Calu3 (cell line): ENCODE measurements at regions of chr2 and their contacts with region 1.

Region 1: GRCh38 chr2:225122583-225123486 is 80.6 kb upstream of the DOCK10 start:
- DNase-seq: peak; percentile 38
- H3K4me3 Mint-ChIP-seq: no peak overlapping the region
- H3K27ac Mint-ChIP-seq: peak overlapping the region; percentile 3
- H3K4me1 Mint-ChIP-seq: no peaks in the 10 kb centered on the region
- H3K27me3 Mint-ChIP-seq: peaks cover 6% of the 10 kb centered on the region
- CTCF ChIP-seq: peak; percentile 39

Region 2: DNA sequence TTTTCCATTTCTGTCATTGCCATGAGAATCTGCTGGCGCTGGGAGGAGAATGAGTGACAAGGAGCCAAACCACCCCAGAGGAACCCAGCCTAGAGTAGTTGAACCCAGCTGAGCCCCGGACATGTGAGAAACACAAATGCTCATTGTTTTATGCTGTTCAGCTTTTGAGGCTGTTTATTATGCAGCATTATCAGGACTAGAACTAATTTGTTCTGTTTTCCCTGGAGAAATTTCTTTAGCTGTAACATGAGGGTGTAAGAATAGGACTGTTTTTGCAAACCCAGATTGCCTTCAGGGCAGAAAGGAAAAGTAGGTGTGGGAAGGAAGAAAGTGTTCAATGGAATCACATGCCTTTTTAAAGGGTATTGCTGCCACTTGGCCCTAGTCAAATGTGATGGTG is 52.0 kb before region 1 on chr2:
- CTCF ChIA-PET with region 1: no interaction called
- intact Hi-C with region 1: no loop called
- DNase-seq: no peak
- H3K4me3 Mint-ChIP-seq: no peak overlapping the region
- H3K27ac Mint-ChIP-seq: no peak overlapping the region
- H3K4me1 Mint-ChIP-seq: no peaks in the 10 kb centered on the region
- H3K27me3 Mint-ChIP-seq: peaks cover 24% of the 10 kb centered on the region
- CTCF ChIP-seq: no peak

Region 3: GRCh38 chr2:225083276-225083675 is 39.6 kb before region 1 on chr2:
- CTCF ChIA-PET with region 1: no interaction called
- intact Hi-C with region 1: no loop called
- DNase-seq: no peak
- H3K4me3 Mint-ChIP-seq: no peak overlapping the region
- H3K27ac Mint-ChIP-seq: no peak overlapping the region
- H3K4me1 Mint-ChIP-seq: peaks cover 9% of the 10 kb centered on the region
- H3K27me3 Mint-ChIP-seq: no peaks in the 10 kb centered on the region
- CTCF ChIP-seq: no peak

Region 4: GRCh38 chr2:225196579-225196978 is 73.7 kb after region 1 on chr2:
- CTCF ChIA-PET with region 1: no interaction called
- intact Hi-C with region 1: no loop called
- DNase-seq: no peak
- H3K4me3 Mint-ChIP-seq: no peak overlapping the region
- H3K27ac Mint-ChIP-seq: no peak overlapping the region
- H3K4me1 Mint-ChIP-seq: no peaks in the 10 kb centered on the region
- H3K27me3 Mint-ChIP-seq: no peaks in the 10 kb centered on the region
- CTCF ChIP-seq: no peak

Region 5: DNA sequence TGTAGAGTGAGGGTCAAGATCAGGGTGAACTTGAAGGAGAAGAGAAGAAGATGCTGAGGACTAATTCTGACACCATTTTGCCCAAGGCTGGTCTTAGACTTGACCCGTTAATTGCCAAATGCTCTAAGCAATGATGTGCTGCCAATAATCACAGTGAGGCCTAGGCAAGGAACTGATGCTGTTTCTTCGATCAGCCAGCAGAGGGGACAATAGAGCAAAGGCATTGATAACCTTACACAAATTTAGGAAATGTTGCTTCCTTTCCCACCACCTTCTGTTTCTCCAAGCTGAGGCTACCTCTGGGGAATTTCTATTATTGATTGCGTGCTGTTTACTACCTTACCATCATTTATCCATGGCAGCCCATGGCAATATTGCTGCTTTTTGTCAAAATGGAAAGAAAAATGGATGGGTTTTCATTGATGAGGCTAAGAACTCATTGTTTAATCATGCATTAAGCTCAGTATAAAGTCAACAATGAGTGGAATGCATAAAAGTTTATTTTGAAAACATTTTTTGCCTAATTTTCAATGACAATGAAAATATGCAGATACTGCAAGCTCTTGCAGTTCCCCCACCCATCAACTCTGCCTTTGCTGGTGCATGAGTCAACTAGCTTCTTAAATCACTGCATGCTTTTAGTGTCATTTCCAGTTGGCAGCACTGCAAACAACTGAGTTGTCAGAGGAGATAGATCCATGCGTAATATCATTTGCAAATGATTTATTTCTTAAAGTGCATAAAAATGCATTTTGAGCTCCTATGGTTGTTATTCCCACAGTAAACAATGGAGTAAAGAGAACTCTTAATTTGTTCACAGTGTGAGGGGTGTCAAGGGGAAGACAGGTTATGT is 160.2 kb after region 1 on chr2:
- CTCF ChIA-PET with region 1: no interaction called
- intact Hi-C with region 1: loop called (anchors 2 kb)
- DNase-seq: peak; percentile 34
- H3K4me3 Mint-ChIP-seq: no peak overlapping the region
- H3K27ac Mint-ChIP-seq: no peak overlapping the region
- H3K4me1 Mint-ChIP-seq: no peaks in the 10 kb centered on the region
- H3K27me3 Mint-ChIP-seq: peaks cover 23% of the 10 kb centered on the region
- CTCF ChIP-seq: peak; percentile 69

Region 6: GRCh38 chr2:225471482-225471881 is 348.6 kb after region 1 on chr2:
- CTCF ChIA-PET with region 1: no interaction called
- intact Hi-C with region 1: loop called (anchors 10 kb)
- DNase-seq: no peak
- H3K4me3 Mint-ChIP-seq: no peak overlapping the region
- H3K27ac Mint-ChIP-seq: peak overlapping the region; percentile 50
- H3K4me1 Mint-ChIP-seq: peaks cover 72% of the 10 kb centered on the region
- H3K27me3 Mint-ChIP-seq: no peaks in the 10 kb centered on the region
- CTCF ChIP-seq: no peak

Region 7: DNA sequence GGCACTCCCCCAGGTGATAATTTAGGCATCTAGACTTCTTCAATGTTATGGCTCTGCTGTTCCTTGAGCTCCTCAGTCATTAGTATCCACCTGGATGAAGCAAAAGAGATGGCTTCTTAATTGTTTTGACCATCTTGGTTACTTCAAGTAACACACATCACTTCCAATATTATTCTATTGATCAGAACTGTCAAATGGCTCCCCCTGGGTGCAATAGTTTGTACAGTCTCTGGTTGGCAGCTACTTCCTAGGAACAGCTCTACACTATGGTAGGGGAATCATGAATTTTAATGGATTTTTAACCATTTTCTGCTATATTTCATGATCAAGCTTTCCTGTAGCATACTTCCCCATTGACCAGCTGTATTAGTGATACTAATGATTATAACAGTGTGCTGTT is 433.6 kb after region 1 on chr2:
- CTCF ChIA-PET with region 1: no interaction called
- intact Hi-C with region 1: loop called (anchors 10 kb)
- DNase-seq: peak; percentile 6
- H3K4me3 Mint-ChIP-seq: no peak overlapping the region
- H3K27ac Mint-ChIP-seq: no peak overlapping the region
- H3K4me1 Mint-ChIP-seq: no peaks in the 10 kb centered on the region
- H3K27me3 Mint-ChIP-seq: peaks cover 11% of the 10 kb centered on the region
- CTCF ChIP-seq: no peak